ENCODE measurements at regions of chr1 and their contacts with region 1.

Region 1: DNA sequence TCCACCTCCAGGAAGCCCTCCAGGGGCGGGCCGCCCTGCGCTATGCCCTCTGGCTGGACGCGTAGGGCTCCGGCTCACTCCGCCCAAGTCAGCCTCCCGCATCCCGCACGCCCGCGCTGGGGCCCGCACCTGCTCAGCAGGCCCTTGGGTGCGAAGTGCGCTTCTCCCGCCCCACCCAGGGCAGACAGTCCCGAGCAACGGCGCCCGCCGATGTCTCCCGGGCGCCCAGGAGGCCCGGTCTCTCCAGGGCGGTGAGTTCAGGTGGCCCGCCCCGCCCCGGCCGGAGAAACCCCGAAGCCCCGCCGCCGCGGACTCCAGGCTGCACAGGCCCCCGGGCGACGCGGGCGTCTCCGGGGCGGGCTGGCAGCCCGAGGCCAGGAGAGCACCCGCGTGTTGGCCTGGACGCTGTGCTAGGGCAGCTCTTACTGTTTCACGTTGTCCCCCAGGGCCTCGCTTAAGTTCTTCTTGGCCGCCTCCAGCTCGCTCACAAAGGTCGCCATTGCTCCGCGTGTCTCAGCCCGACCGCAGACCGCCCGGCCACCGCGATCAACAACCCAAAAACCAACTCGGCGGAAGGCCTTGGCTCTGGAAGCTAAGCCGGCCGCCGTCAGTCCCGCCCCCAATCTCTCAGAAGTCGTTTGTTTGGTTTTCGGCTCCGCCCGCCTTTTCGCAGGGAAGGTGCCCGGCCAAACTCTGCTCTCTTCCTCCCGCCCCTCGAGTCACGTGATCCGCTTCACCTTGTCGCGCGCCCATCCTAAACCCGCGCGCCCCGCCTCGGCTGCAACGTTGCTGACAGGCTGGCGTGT is at the start of gene TADA1:
- DNase-seq: peak; percentile 99
- ATAC-seq: peak; percentile 92
- H3K4me3 ChIP-seq: peak within 1 kb of the TSS; percentile 44 to 80 (median 74)
- H3K4me3 Mint-ChIP-seq: peak within 1 kb of the TSS; percentile 98
- H3K27ac ChIP-seq: peak within 1 kb of the TSS; percentile 68 to 86
- H3K27ac Mint-ChIP-seq: peak within 1 kb of the TSS; percentile 99
- H3K4me1 ChIP-seq: peaks cover 12 to 13% of the 10 kb centered on the region in 2 donors
- H3K4me1 Mint-ChIP-seq: peaks cover 38% of the 10 kb centered on the region
- H3K27me3 ChIP-seq: no peaks in the 10 kb centered on the region
- H3K27me3 Mint-ChIP-seq: no peaks in the 10 kb centered on the region
- CTCF ChIP-seq: no peak
- total RNA-seq, gene TADA1: 12.9 and 13.1 TPM in 2 replicates

Region 2: DNA sequence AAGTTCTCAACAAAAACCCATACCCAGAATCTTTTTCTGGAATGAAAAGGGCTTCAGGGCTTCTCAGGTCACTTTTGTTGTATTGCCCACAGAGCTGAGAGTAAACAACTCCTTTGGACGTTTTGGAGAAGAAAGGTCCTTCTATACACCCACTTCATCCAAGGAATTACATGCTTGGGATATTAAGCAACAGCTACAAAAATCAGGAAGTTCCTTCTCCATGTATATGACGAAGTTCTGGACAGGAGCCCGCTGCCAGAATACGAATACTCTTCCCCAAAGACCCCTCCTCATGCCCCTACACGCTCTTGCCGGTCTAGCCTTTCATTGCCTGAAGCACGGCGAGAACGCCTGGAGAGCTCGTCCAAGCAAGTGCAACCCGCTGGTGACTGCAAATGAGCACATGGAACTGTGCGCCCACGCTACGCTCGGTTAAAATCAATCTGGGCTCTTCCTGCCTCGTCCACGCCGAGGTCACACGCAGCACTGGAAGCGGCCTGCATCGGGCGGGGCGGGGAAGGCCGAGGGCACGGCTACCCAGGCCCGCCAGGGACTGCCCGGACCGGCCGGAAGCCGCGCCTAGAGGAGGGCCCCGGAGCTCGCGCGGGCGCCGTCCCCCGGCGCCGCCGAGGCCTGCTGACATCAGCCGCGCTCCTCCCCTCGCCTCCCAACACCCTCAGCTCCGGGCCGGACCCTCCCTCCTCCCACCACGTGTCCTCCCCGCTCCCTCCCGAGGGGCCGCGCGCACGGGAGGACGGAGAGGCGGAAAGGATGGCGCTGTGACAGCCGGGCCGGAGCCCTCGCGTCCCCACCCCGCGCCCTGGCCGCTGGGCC is 37.0 kb before region 1 on chr1 and contains the start of gene POGK:
- CTCF ChIA-PET with region 1: interaction called, 12 read pairs
- POLR2A ChIA-PET with region 1: interaction called, 11 read pairs
- intact Hi-C with region 1: loop called (anchors 1 kb)
- DNase-seq: peak; percentile 89
- ATAC-seq: peak; percentile 93
- H3K4me3 ChIP-seq: peak within 1 kb of the TSS; percentile 71 to 86 (median 71)
- H3K4me3 Mint-ChIP-seq: peak within 1 kb of the TSS; percentile 97
- H3K27ac ChIP-seq: peak within 1 kb of the TSS; percentile 83 to 89
- H3K27ac Mint-ChIP-seq: peak within 1 kb of the TSS; percentile 99
- H3K4me1 ChIP-seq: peaks cover 21 to 25% of the 10 kb centered on the region in 2 donors
- H3K4me1 Mint-ChIP-seq: peaks cover 31% of the 10 kb centered on the region
- H3K27me3 ChIP-seq: peaks cover 0 to 3% (median 0%) of the 10 kb centered on the region in 4 experiments
- H3K27me3 Mint-ChIP-seq: no peaks in the 10 kb centered on the region
- CTCF ChIP-seq: no peak
- total RNA-seq, gene POGK: 40.8 and 45.0 TPM in 2 replicates

Measured in B cell (primary cell).